H1 (cell line): ENCODE measurements at regions of chr18 and their contacts with region 1.

Region 1: DNA sequence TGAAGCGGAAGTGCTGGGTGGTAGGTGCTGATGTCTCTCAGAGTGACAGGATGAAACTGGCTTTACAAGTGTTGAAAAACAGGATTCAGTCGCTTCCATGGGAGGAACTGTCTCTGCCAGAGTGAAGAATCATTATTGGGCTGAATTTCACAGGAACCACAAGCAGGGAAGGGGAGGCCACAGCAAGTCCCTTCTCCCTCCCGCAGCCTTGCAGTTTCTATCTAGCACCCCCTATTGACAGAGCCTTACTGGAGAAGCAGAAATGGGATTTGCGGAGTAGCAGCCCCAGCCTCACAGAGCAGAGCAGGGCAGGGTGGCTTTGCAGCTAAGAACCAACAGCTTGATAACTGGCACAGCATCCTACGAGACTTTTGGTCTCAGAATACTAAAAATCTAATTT is 33.3 kb upstream of the RMP24 start:
- DNase-seq: no peak
- H3K4me3 ChIP-seq: no peak overlapping the region
- H3K27ac ChIP-seq: no peak overlapping the region
- H3K4me1 ChIP-seq: peaks cover 0 to 9% (median 5%) of the 10 kb centered on the region in 4 experiments; a peak in 5 of 7 replicates
- H3K27me3 ChIP-seq: no peaks in the 10 kb centered on the region
- CTCF ChIP-seq: peak; percentile 63 to 83 (median 82)
- EP300 ChIP-seq: no peak
- POLR2A ChIP-seq: no peak
- RAD21 ChIP-seq: peak; percentile 73 to 83

Region 2: DNA sequence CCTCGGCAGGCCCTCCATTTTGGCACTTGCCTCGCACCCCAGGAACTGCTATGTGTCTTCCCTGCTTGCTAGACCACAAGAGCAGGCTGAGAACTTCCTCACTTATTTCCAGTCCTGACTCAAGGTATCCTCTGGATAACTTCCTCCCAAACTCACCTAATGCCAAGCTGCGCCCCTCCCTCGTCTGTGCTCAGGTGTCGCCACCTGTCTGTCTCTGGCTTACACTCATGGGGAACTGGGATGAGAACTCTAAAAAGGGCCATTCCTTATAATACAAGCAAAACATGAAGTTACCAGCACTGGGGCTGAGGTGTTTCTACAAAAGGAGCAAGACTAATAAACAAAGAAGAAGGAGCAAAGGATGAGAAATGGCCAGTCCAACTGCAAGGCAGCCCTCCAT is 158.2 kb before region 1 on chr18:
- CTCF ChIA-PET with region 1: interaction called, 10 read pairs
- POLR2A ChIA-PET with region 1: no interaction called
- DNase-seq: no peak
- H3K4me3 ChIP-seq: no peak overlapping the region
- H3K27ac ChIP-seq: no peak overlapping the region
- H3K4me1 ChIP-seq: peaks cover 0 to 9% (median 0%) of the 10 kb centered on the region in 4 experiments; a peak in 1 of 7 replicates
- H3K27me3 ChIP-seq: no peaks in the 10 kb centered on the region
- CTCF ChIP-seq: peak; percentile 22 to 40 (median 33); a peak in 3 of 4 replicates
- EP300 ChIP-seq: no peak
- POLR2A ChIP-seq: no peak
- RAD21 ChIP-seq: peak; percentile 24 to 42; a peak in 3 of 4 replicates

Region 3: GRCh38 chr18:35917044-35917443 is 22.1 kb before region 1 on chr18:
- CTCF ChIA-PET with region 1: interaction called, 28 read pairs
- POLR2A ChIA-PET with region 1: no interaction called
- DNase-seq: no peak
- H3K4me3 ChIP-seq: no peak overlapping the region
- H3K27ac ChIP-seq: no peak overlapping the region
- H3K4me1 ChIP-seq: peaks cover 0 to 4% (median 3%) of the 10 kb centered on the region in 4 experiments; a peak in 5 of 7 replicates
- H3K27me3 ChIP-seq: no peaks in the 10 kb centered on the region
- CTCF ChIP-seq: peak in 2 of 3 experiments; percentile 46 to 58; a peak in 3 of 4 replicates
- EP300 ChIP-seq: no peak
- POLR2A ChIP-seq: no peak
- RAD21 ChIP-seq: peak; percentile 43 to 58

Region 4: DNA sequence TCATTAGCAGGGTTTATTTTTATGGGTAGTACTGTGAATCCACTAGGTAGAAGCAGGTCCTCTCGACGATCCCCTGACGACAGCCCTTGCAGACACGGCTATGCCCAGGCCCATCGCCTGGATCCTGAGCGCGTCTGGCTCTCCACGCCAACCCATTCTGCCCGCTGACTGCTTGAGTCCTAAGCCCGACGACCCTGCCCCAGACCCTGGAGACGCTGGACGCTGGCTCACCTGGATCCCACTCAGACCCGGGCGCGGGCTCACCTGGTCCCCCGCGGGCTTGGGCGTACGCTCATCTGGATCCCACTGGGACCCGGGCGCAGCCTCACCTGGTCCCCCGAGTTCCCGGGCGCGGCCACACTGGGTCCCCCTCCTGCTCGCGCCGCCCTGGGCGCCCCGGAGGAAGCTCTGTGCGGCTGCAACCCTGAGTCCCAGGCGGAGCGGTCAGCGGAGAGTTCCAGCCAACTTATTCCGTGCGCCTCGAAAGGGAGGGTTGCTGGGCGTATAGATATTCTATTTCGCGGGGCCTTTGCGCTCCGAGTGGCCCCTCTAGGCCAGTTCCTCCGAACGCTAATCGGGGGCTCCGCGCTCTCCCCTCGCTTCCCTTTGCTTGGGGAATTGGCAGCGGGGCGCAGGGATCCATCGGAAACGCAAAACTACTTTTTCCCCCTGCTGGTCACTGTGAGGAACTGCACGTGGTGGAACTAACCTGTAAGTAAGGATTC is 10.9 kb after region 1 on chr18:
- CTCF ChIA-PET with region 1: interaction called, 78 read pairs
- POLR2A ChIA-PET with region 1: interaction called, 4 read pairs
- DNase-seq: peak in 1 of 2 experiments; percentile 86
- H3K4me3 ChIP-seq: peak overlapping the region; percentile 75 to 87 (median 80)
- H3K27ac ChIP-seq: no peak overlapping the region
- H3K4me1 ChIP-seq: peaks cover 0 to 7% (median 2%) of the 10 kb centered on the region in 4 experiments; a peak in 4 of 7 replicates
- H3K27me3 ChIP-seq: no peaks in the 10 kb centered on the region
- CTCF ChIP-seq: peak; percentile 69 to 86 (median 75)
- EP300 ChIP-seq: peak in 1 of 2 experiments; percentile 11; a peak in 1 of 3 replicates
- POLR2A ChIP-seq: peak in 1 of 2 experiments; percentile 15; a peak in 1 of 3 replicates
- RAD21 ChIP-seq: peak; percentile 59 to 75